A673 (cell line): ENCODE measurements at regions of chr15 and their contacts with region 1.

Region 1: GRCh38 chr15:77543159-77543882 is 89.4 kb downstream of the LINGO1 start:
- DNase-seq: peak; percentile 92
- H3K4me3 ChIP-seq: peak overlapping the region; percentile 41
- H3K27ac ChIP-seq: peak overlapping the region; percentile 50
- H3K4me1 ChIP-seq: peaks cover 8% of the 10 kb centered on the region
- H3K27me3 ChIP-seq: no peaks in the 10 kb centered on the region
- CTCF ChIP-seq: peak; percentile 99

Region 2: DNA sequence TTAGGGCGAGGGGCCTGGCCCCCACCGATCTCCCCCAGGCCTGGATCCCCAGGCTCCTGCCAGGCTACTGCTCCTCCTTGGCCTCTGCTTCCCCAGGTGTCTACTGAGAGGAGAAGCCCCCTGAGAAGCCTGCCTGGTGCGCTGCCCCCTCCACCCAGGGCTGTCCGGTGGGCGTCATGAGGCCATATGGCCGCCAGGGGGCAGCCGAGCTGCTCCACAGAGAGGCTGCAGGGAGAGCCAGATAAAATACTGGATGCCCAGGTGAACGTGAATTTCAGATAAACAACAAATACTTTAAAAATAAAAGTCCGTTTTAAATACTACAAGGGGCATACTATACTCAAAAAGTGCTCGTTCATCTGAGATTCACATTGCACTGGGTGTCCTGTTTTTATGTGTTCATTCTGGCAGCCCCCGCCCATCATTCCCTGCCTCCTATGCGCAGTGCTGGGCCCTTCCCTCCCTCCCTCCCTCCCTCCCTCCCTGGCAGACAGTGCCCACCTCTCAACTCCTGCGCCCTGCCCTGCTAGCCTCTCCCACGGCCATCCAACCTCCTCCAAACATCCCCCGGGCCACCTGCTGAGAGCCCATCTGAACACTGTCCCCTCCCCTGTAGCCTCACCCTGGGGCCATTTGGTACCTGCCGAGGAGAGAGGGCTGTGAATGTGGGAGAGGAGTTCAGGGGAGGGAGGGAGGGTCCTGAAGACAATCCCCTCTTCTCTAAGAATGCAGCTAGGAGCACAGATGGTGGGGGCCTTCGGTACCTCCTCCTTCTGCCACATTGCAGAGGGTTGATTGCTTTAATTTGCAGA is 518.8 kb before region 1 on chr15:
- CTCF ChIA-PET with region 1: interaction called, 5 read pairs
- POLR2A ChIA-PET with region 1: interaction called, 9 read pairs
- intact Hi-C with region 1: loop called (anchors 5 kb)
- DNase-seq: peak; percentile 73
- H3K4me3 ChIP-seq: no peak overlapping the region
- H3K27ac ChIP-seq: no peak overlapping the region
- H3K4me1 ChIP-seq: no peaks in the 10 kb centered on the region
- H3K27me3 ChIP-seq: no peaks in the 10 kb centered on the region
- CTCF ChIP-seq: peak; percentile 97

Region 3: DNA sequence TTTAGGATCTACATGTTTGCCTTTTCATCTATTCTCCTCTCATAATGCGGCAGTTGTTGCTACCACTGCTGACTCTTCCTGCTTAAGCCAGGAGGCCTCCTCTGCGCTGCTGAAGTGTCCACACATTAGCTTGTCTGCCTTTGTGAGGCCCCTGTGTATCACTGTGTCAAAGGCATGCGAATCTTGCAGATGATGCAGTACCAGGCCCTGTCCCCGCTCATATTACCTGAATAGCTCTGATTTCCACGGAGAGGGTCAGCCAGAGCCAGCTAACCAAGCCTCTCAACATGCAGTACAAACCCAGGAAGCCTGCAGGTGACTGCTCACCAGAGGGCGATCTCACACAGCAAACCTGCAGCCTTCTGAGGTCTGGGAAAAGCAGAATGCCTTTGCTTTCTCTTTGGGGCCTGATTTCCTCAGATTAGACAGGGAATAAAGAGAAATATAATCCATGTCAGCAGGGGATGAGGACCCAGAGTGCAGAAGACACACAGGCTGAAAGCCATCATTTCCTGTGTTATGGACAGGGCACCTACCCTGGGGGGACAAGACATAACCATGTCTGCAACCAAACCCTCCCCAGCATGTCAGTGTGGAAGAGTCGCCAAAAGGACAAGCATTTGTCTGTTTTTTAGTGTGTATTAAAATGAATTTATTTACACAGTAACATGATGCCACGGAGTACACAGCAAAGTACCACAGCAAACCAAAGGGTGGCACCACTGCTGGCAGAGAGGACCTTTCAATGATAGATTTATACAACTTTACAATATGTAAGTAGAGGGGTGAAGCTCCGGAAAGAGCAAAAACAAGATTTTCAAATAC is 435.6 kb before region 1 on chr15:
- CTCF ChIA-PET with region 1: interaction called, 12 read pairs
- POLR2A ChIA-PET with region 1: no interaction called
- intact Hi-C with region 1: no loop called
- DNase-seq: peak; percentile 81
- H3K4me3 ChIP-seq: no peak overlapping the region
- H3K27ac ChIP-seq: no peak overlapping the region
- H3K4me1 ChIP-seq: peaks cover 9% of the 10 kb centered on the region
- H3K27me3 ChIP-seq: no peaks in the 10 kb centered on the region
- CTCF ChIP-seq: peak; percentile 83

Region 4: DNA sequence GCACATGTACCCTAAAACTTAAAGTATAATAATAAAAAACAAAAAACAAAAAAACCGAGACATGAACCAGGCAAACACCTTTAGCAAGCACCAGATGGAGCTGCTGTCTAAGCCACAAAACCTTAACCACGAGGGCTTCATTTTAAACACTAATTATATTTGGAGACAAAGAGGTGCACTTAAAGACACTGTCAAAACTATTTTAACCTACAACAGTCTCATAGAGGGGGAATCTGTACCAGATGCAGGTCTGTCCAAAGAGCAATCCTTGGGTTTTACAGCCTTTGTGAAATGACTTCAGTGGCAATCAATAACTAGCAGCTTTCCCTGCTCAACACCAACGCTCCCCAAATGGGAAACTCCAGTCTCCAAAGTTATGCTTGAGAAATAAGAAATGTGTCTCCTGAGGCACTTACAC is 356.7 kb before region 1 on chr15:
- CTCF ChIA-PET with region 1: interaction called, 42 read pairs
- POLR2A ChIA-PET with region 1: no interaction called
- intact Hi-C with region 1: loop called (anchors 1 kb)
- DNase-seq: peak; percentile 65
- H3K4me3 ChIP-seq: no peak overlapping the region
- H3K27ac ChIP-seq: peak overlapping the region; percentile 12
- H3K4me1 ChIP-seq: peaks cover 42% of the 10 kb centered on the region
- H3K27me3 ChIP-seq: no peaks in the 10 kb centered on the region
- CTCF ChIP-seq: peak; percentile 77

Region 5: DNA sequence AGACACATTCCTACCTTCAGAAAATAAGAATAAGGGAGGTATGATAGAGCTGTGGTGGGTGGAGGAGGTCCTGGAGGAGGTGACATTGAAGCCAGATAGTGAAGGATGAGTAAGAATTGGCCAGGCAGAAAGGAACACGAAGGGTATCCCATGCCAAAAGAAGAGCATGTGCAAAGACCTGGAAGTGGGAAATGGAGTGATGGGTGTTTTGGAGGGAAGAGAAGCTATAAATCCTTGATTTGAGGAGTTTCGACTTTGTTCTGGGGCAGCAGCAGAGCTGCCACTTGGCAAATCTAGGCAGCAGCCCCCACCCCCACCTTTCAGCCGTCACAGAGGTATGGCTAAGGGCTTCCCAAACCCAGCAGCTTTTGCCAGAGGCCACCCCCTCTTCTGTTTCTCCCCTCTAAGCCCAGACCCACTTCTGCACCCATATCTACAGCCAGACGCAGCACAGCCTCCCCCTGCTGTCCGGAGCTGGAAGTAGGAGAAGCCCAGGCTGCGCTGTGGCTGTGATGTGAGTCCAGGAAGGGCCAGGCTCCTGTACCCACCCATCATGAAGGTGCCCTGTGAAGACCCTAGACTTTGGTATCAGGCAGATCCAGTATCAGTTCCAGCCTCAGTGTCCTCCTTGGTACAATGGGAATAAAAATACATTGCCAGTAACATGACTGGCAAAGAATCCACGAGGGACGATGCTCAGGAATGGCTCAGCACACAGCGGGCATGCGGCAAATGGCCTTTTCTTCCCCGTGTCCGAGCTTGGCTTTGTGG is 278.1 kb after region 1 on chr15:
- CTCF ChIA-PET with region 1: interaction called, 14 read pairs
- POLR2A ChIA-PET with region 1: no interaction called
- intact Hi-C with region 1: no loop called
- DNase-seq: peak; percentile 89
- H3K4me3 ChIP-seq: peak overlapping the region; percentile 93
- H3K27ac ChIP-seq: peak overlapping the region; percentile 91
- H3K4me1 ChIP-seq: peaks cover 36% of the 10 kb centered on the region
- H3K27me3 ChIP-seq: no peaks in the 10 kb centered on the region
- CTCF ChIP-seq: peak; percentile 98